ENCODE measurements at regions of chr1 and their contacts with region 1.

Region 1: DNA sequence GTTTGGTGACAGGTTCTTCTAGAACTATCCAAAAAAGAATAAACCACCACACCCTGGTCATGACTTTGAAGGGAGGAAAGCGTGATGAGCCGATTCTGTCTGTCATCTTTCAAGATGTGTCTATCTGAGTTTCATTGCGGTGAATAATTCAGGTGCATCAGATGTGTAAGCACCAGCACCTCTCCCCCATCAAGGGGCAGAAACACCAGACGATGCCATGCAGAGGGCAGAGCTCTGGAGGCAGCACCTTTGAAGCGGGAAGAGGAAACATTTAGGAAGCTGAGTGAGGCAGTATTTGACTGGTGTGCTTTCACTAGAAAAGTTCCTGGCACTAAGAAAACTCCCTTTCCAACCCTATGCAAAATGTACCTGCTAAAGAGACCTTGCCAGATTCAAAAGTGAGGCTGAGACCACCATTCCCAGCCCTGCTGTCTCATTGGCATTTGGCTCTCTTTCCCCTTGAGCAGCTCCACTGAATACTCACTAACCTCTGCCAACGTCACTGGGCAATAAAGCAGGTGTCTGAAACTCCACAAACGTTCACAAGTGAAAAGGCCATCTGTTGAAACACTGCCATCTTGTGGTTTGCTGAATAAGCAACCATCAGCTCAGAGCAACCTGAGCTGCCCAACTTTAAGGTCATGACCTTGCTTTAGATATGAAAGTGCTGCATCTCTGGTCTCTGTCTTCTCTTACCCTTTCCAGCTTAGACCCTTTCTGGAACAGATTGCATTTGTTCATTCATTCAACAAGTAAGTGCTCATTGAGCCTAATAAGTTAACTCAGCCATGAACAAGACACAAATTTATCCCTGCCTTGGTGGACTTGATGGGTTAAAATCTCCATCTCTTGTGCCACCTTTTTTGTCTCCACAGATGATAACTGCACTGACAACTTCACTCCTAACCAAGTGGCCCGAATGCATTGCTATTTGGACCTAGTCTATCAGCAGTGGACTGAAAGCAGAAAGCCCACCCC is 228.6 kb downstream of the PAPPA2 start:
- DNase-seq: peak; percentile 18 to 65
- ATAC-seq: peak; percentile 75 to 87
- H3K4me3 ChIP-seq: no peak overlapping the region
- H3K27ac ChIP-seq: no peak overlapping the region
- H3K4me1 ChIP-seq: no peaks in the 10 kb centered on the region
- CTCF ChIP-seq: peak; percentile 64
- EP300 ChIP-seq: no peak
- POLR2A ChIP-seq: no peak
- RAD21 ChIP-seq: peak; percentile 49 to 61; a peak in 4 of 5 replicates

Region 2: GRCh38 chr1:176374967-176375569 is 316.5 kb before region 1 on chr1:
- CTCF ChIA-PET with region 1: interaction called, 10 read pairs
- POLR2A ChIA-PET with region 1: no interaction called
- DNase-seq: peak; percentile 40 to 71
- ATAC-seq: peak; percentile 96 to 98
- H3K4me3 ChIP-seq: no peak overlapping the region
- H3K27ac ChIP-seq: no peak overlapping the region
- H3K4me1 ChIP-seq: no peaks in the 10 kb centered on the region
- CTCF ChIP-seq: peak; percentile 87
- EP300 ChIP-seq: no peak
- POLR2A ChIP-seq: no peak
- RAD21 ChIP-seq: peak; percentile 77 to 86